Activated CD8-positive, alpha-beta T cell treated with anti-CD3 and anti-CD28 coated beads for 36 hours (primary cell): ENCODE measurements at regions of chr17 and their contacts with region 1.

Region 1: DNA sequence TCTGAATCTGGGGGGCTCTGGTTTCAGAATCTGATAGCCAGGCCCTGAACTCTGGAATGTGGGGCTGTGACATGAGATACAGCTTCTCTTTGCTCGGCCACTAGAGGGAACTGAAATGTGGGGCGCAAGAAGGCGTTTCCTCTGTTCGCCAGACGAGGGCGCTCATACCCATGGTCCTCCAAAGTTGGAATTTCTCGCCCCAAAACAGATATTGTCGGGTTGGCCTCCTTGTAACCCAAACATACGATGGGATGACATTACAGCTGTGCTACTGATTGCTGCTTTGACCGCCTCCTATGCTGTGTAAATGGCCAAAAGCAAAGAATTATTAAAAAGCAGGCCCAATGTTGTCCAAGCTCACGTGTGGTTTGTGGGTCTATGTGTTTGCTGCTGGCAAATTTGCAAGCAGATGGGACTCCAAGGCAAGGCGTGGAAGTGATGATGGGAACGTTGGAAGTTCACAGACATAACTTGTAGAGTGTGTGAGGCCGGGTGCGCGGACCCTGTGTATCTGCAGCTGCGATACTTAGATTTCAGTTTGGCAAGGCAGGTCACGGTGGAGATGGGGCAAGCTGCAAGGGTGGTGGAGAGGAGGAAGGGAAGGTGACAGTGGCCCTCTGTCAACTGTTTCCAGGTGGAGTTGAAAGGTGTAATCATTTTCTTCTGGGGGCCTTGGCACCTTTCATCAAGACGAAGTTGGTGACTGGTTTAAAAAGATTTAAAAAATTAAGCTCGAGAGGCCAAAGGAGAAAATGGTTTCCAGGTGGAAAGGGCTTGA is 13.0 kb upstream of the MSI2 start:
- DNase-seq: peak; percentile 82
- ATAC-seq: peak; percentile 94
- H3K4me3 Mint-ChIP-seq: no peak overlapping the region
- H3K27ac Mint-ChIP-seq: peak overlapping the region; percentile 40
- H3K4me1 Mint-ChIP-seq: peaks cover 3% of the 10 kb centered on the region
- H3K27me3 Mint-ChIP-seq: peaks cover 2% of the 10 kb centered on the region
- CTCF ChIP-seq: peak; percentile 100

Region 2: GRCh38 chr17:57097832-57098421 is 145.4 kb before region 1 on chr17:
- CTCF ChIA-PET with region 1: no interaction called
- POLR2A ChIA-PET with region 1: no interaction called
- intact Hi-C with region 1: no loop called
- DNase-seq: no peak
- ATAC-seq: no peak
- H3K4me3 Mint-ChIP-seq: no peak overlapping the region
- H3K27ac Mint-ChIP-seq: no peak overlapping the region
- H3K4me1 Mint-ChIP-seq: peaks cover 25% of the 10 kb centered on the region
- H3K27me3 Mint-ChIP-seq: no peaks in the 10 kb centered on the region
- CTCF ChIP-seq: no peak

Region 3: DNA sequence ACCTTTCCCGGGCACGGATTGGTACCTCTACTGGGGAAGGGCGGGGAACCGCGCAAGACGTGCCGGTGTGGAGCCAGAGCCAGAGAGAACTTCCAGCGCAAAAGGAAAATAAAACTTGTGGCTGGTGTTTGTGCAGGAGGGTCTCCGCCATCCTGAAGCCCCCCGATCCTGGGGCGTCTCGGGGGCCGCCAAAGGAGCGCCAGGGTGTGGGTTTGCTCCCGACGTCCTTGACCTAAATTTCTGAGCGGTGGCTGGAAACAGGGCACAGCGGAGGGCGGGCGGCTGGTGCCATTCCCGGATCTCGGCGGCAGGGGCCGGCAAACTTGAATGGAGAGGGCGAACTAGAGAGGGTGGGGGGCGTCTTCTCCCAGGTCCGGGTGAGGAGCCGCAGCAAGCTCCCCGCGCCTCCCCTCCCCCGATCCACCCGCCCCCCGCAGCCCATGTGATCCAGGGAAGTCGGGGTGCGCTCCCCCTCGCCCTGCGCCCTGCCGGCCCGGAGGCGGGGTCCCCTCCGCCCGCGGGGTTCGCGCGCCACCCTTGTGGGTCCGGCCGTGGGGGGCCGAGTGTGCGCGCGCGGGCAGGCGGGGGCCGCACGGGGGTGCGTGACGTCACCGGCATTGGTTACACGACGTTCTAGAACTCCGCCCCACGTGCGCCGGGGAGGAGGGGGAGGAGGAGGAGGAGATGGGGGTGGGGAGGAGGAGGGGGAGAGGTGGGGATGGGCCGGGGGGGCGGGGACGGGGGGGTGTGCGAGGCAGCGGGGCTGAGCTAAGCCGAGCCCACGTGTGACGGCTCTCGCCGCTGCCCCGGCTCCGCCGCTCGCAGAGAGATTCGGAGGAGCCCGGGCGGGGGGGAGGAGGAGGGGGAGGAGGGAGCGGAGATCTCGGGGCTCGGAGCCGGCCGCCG is 12.7 kb after region 1 on chr17 and contains the start of gene MSI2:
- CTCF ChIA-PET with region 1: interaction called, 54 read pairs
- POLR2A ChIA-PET with region 1: interaction called, 5 read pairs
- intact Hi-C with region 1: no loop called
- DNase-seq: peak; percentile 91
- ATAC-seq: peak; percentile 79
- H3K4me3 Mint-ChIP-seq: peak within 1 kb of the TSS; percentile 83
- H3K27ac Mint-ChIP-seq: peak within 1 kb of the TSS; percentile 95
- H3K4me1 Mint-ChIP-seq: peaks cover 36% of the 10 kb centered on the region
- H3K27me3 Mint-ChIP-seq: no peaks in the 10 kb centered on the region
- CTCF ChIP-seq: no peak
- total RNA-seq, gene MSI2: 59.6 to 61.7 TPM

Region 4: GRCh38 chr17:57317079-57317478 is 73.7 kb after region 1 on chr17:
- CTCF ChIA-PET with region 1: interaction called, 11 read pairs
- POLR2A ChIA-PET with region 1: no interaction called
- intact Hi-C with region 1: no loop called
- DNase-seq: no peak
- ATAC-seq: no peak
- H3K4me3 Mint-ChIP-seq: no peak overlapping the region
- H3K27ac Mint-ChIP-seq: no peak overlapping the region
- H3K4me1 Mint-ChIP-seq: peaks cover 5% of the 10 kb centered on the region
- H3K27me3 Mint-ChIP-seq: no peaks in the 10 kb centered on the region
- CTCF ChIP-seq: no peak

Region 5: GRCh38 chr17:57422574-57423164 is 179.3 kb after region 1 on chr17:
- CTCF ChIA-PET with region 1: interaction called, 20 read pairs
- POLR2A ChIA-PET with region 1: no interaction called
- intact Hi-C with region 1: no loop called
- DNase-seq: peak; percentile 55
- ATAC-seq: peak; percentile 81
- H3K4me3 Mint-ChIP-seq: no peak overlapping the region
- H3K27ac Mint-ChIP-seq: peak overlapping the region; percentile 25
- H3K4me1 Mint-ChIP-seq: peaks cover 54% of the 10 kb centered on the region
- H3K27me3 Mint-ChIP-seq: no peaks in the 10 kb centered on the region
- CTCF ChIP-seq: no peak

Region 6: GRCh38 chr17:57515656-57516211 is 272.4 kb after region 1 on chr17:
- CTCF ChIA-PET with region 1: interaction called, 15 read pairs
- POLR2A ChIA-PET with region 1: no interaction called
- intact Hi-C with region 1: no loop called
- DNase-seq: no peak
- ATAC-seq: no peak
- H3K4me3 Mint-ChIP-seq: no peak overlapping the region
- H3K27ac Mint-ChIP-seq: no peak overlapping the region
- H3K4me1 Mint-ChIP-seq: peaks cover 9% of the 10 kb centered on the region
- H3K27me3 Mint-ChIP-seq: no peaks in the 10 kb centered on the region
- CTCF ChIP-seq: no peak

Region 7: GRCh38 chr17:57615836-57616757 is 372.7 kb after region 1 on chr17:
- CTCF ChIA-PET with region 1: interaction called, 13 read pairs
- POLR2A ChIA-PET with region 1: no interaction called
- intact Hi-C with region 1: no loop called
- DNase-seq: no peak
- ATAC-seq: no peak
- H3K4me3 Mint-ChIP-seq: no peak overlapping the region
- H3K27ac Mint-ChIP-seq: no peak overlapping the region
- H3K4me1 Mint-ChIP-seq: peaks cover 28% of the 10 kb centered on the region
- H3K27me3 Mint-ChIP-seq: no peaks in the 10 kb centered on the region
- CTCF ChIP-seq: no peak

Region 8: GRCh38 chr17:57783106-57783742 is 539.9 kb after region 1 on chr17:
- CTCF ChIA-PET with region 1: interaction called, 27 read pairs
- POLR2A ChIA-PET with region 1: no interaction called
- intact Hi-C with region 1: no loop called
- DNase-seq: peak; percentile 87
- ATAC-seq: peak; percentile 98
- H3K4me3 Mint-ChIP-seq: no peak overlapping the region
- H3K27ac Mint-ChIP-seq: no peak overlapping the region
- H3K4me1 Mint-ChIP-seq: no peaks in the 10 kb centered on the region
- H3K27me3 Mint-ChIP-seq: peaks cover 8% of the 10 kb centered on the region
- CTCF ChIP-seq: peak; percentile 98